Heart right ventricle (tissue), 16 donors: ENCODE measurements at regions of chr12 and their contacts with region 1.

Region 1: GRCh38 chr12:122793685-122794106 is 19.3 kb downstream of the CCDC62 start:
- DNase-seq: no peak
- ATAC-seq: peak in 5 of 8 donors; percentile 44 to 63 (median 61)
- H3K4me3 ChIP-seq: no peak overlapping the region
- H3K27ac ChIP-seq: no peak overlapping the region
- H3K4me1 ChIP-seq: peaks cover 0 to 6% (median 0%) of the 10 kb centered on the region in 9 donors
- H3K27me3 ChIP-seq: no peaks in the 10 kb centered on the region
- CTCF ChIP-seq: peak; percentile 58 to 85 (median 74)

Region 2: GRCh38 chr12:122116707-122117535 is 676.8 kb before region 1 on chr12:
- intact Hi-C with region 1: no loop called
- DNase-seq: no peak
- ATAC-seq: peak in 6 of 8 donors; percentile 25 to 53 (median 46)
- H3K4me3 ChIP-seq: no peak overlapping the region
- H3K27ac ChIP-seq: no peak overlapping the region
- H3K4me1 ChIP-seq: peaks cover 0 to 27% (median 14%) of the 10 kb centered on the region in 9 donors
- H3K27me3 ChIP-seq: no peaks in the 10 kb centered on the region
- CTCF ChIP-seq: peak in 3 of 9 donors; percentile 19 to 39 (median 31)

Region 3: DNA sequence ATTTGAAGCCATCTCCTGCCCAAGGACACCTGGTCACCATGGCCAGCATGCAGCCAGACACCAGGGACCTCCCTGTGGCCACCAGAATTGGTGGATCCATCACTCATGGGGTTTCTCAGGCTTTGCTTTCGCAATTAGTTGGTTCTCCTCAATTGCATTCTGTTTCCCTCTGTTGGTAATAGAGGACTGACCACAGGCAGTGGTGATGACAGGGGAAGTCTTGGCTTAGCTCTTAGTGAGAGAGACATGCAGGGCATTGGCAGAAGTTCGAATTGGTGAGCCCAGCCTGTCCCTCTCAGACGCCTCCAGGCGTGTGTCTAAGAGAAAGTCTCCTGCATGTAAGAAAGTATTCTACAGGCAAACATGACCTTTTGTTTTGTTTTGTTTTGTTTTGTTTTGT is 111.9 kb before region 1 on chr12:
- intact Hi-C with region 1: no loop called
- DNase-seq: peak in 1 of 2 donors; percentile 6
- ATAC-seq: peak in 3 of 8 donors; percentile 38 to 66 (median 46)
- H3K4me3 ChIP-seq: no peak overlapping the region
- H3K27ac ChIP-seq: no peak overlapping the region
- H3K4me1 ChIP-seq: peaks cover 0 to 30% (median 0%) of the 10 kb centered on the region in 9 donors
- H3K27me3 ChIP-seq: no peaks in the 10 kb centered on the region
- CTCF ChIP-seq: no peak

Region 4: DNA sequence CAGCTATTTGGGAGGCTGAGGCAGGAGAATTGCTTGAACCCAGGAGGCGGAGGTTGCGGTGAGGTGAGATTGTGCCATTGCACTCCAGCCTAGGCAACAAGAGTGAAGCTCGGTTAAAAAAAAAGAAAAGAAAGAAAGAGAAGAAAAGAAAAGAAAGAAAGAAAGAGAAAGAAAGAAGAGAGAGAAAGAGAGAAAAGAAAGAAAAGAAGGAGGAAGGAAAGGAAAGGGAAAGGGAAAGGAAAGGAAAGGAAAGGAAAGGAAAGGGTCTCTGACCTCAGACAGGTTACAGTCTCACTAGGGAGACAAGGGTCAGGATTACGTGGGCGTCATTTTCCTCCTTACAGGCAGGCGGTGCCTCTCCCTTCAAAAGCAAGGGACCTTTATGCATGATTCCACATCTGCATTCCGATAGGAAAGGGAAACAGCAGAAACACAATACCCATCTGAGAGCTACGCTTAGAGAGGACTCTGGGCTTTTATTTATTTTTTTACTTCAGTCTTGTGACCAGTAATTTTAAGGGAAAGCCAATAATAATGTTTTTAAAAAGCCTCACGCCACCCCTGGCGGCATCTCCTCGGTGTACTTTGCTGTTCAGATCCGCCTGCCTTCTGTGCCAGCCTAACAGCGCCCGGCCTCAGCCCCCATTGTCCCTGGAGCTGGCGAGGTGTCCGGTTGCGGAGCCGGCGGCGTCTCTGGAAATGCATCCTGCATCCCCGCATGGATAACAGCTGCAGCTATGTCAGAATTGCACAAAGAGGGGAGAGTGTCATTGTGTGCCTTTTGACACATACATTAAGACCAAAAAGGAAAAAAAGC is 40.6 kb after region 1 on chr12:
- intact Hi-C with region 1: loop called in 1 of 10 experiments (anchors 5 kb)
- DNase-seq: peak in 1 of 2 donors; percentile 48
- ATAC-seq: peak; percentile 25 to 63 (median 52)
- H3K4me3 ChIP-seq: peak overlapping the region; percentile 4 to 83 (median 72)
- H3K27ac ChIP-seq: peak overlapping the region; percentile 5 to 85 (median 62)
- H3K4me1 ChIP-seq: peaks cover 0 to 35% (median 19%) of the 10 kb centered on the region in 9 donors
- H3K27me3 ChIP-seq: peaks cover 0 to 17% (median 0%) of the 10 kb centered on the region in 7 donors
- CTCF ChIP-seq: peak in 4 of 9 donors; percentile 13 to 40 (median 34)

Region 5: GRCh38 chr12:122851820-122852219 is 58.1 kb after region 1 on chr12:
- intact Hi-C with region 1: loop called in 2 of 10 experiments (anchors 10 kb)
- DNase-seq: no peak
- ATAC-seq: peak in 6 of 8 donors; percentile 20 to 54 (median 32)
- H3K4me3 ChIP-seq: no peak overlapping the region
- H3K27ac ChIP-seq: peak overlapping the region in 6 of 10 donors; percentile 41 to 71 (median 46)
- H3K4me1 ChIP-seq: peaks cover 4 to 42% (median 24%) of the 10 kb centered on the region in 9 donors
- H3K27me3 ChIP-seq: no peaks in the 10 kb centered on the region
- CTCF ChIP-seq: no peak

Region 6: GRCh38 chr12:122946690-122947341 is 153.1 kb after region 1 on chr12:
- intact Hi-C with region 1: loop called in 9 of 10 experiments (anchors 1 to 10 kb)
- DNase-seq: peak; percentile 55 to 73
- ATAC-seq: peak; percentile 45 to 83 (median 75)
- H3K4me3 ChIP-seq: no peak overlapping the region
- H3K27ac ChIP-seq: peak overlapping the region in 9 of 10 donors; percentile 56 to 85 (median 69)
- H3K4me1 ChIP-seq: peaks cover 7 to 63% (median 50%) of the 10 kb centered on the region in 9 donors
- H3K27me3 ChIP-seq: no peaks in the 10 kb centered on the region
- CTCF ChIP-seq: peak in 5 of 9 donors; percentile 17 to 43 (median 28)

Region 7: DNA sequence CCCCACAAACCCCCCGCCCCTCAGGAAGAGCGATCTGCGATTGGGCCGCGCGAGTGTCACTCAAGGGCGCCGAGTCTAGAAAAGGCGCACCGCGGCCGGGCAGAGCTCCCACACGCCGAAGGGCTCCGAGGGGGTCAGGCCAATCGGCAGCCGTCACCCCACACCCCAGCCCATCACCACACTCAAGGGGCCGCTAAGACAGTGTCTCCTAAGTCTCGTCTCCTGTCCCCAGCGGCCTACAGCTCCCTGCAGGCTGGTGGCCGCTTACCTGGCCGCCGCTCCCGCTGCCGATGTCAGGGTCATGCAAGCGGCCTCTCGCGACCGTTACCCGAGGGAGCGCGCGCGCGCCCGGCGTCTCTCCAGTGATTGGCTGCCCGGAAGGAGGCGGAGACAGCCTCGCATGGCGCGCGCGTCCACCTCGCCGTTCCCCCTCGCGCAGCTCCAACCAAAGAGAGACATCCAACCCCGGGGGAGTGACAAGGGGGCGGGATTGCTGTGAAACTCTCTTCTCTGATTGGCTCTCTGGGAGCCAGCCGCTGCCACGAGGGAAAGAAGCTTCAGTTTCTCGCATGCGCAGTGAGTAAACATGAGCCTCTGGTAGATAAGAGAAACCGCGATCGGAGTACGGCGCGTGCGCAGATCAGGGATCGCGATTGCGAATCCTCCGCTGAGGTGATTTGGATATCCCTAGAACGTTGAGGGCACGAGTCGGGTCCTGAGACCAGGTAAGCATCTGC is 439.3 kb after region 1 on chr12 and contains the starts of genes MPHOSPH9 and MTRFR:
- intact Hi-C with region 1: loop called in 1 of 10 experiments (anchors 10 kb)
- DNase-seq: peak; percentile 98 to 100
- ATAC-seq: peak; percentile 99
- H3K4me3 ChIP-seq: peak within 1 kb of the TSS; percentile 79 to 97 (median 87)
- H3K27ac ChIP-seq: peak within 1 kb of the TSS; percentile 66 to 96 (median 90)
- H3K4me1 ChIP-seq: peaks cover 2 to 56% (median 34%) of the 10 kb centered on the region in 9 donors
- H3K27me3 ChIP-seq: no peaks in the 10 kb centered on the region
- CTCF ChIP-seq: no peak
- total RNA-seq, gene MPHOSPH9: 19.7 to 33.6 (median 27.1) TPM
- total RNA-seq, gene MTRFR: 9.5 to 12.1 (median 10.8) TPM